ENCODE measurements at regions of chr15 and their contacts with region 1.

Region 1: DNA sequence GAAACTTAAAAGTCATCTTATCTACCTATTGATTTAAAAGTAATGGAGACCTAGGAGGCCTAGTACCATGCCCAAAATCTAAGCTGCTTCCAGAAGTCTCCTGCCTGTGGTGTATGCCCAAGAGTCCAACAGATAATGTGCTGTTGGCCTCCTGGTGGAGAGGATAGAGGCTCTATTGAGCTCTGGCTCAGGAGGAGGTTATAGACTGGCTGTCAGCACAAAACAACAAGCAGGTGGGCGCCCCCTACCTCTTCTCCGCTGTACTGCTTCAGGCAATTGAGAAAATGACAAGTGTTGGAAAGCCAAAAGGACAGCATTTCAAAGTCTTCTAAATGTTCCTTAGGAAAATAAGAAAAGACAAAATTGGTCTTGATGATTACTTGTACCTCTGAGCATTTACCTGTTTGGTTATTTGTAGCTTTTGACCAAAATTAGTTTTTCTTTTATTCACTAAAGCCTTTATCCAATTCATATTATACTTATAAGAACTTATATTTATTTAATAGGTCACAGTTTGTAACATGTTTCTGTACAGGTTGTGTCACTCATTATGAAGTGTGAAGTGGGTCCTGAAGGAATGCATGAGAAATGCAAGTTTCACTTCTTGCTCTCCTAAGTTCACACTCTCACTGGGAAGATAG is 17.2 kb upstream of the GNB5 start:
- DNase-seq: peak; percentile 86
- H3K4me3 Mint-ChIP-seq: no peak overlapping the region
- H3K27ac Mint-ChIP-seq: no peak overlapping the region
- H3K4me1 Mint-ChIP-seq: no peaks in the 10 kb centered on the region
- H3K27me3 Mint-ChIP-seq: no peaks in the 10 kb centered on the region

Region 2: DNA sequence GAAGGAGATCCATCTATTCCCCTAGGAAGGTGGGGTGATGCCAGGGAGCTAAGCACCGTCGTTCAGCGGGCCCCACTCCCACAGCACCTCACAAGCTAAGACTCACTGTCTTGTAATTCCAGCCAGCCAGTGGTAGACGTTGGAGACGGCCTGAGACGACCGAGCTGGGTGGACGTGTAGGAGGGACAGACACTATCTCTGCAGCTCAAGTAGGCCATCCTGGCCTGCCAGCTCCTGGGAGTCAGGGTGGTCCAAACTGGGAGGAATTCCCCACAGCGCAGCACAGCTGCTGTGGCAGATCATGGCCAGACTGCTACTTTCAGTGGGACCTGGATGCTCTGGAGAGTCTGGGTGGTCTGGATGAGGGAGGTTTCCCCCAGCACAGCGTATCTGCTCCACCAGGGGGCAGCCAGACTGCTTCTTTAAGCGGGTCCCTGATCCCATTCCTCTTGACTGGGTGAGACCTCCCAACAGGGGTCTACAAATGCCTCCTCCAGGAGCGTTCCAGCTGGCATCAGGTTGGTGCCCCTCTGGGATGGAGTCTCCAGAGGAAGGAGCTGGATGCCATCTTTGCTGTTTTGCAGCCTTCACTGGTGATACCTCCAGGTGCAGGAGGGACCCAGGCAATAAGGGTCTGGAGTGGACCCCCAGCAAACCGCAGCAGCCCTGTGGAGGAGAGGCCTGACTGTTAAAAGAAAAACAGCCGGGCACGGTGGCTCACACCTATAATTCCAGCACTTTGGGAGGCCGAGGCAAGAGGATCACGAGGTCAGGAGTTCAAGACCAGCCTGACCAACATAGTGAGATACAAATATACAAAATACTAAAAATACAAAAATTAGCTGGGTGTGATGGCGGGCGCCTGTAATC is 44.9 kb before region 1 on chr15:
- CTCF ChIA-PET with region 1: interaction called, 21 read pairs
- POLR2A ChIA-PET with region 1: no interaction called
- intact Hi-C with region 1: loop called (anchors 1 kb)
- DNase-seq: no peak
- H3K4me3 Mint-ChIP-seq: no peak overlapping the region
- H3K27ac Mint-ChIP-seq: no peak overlapping the region
- H3K4me1 Mint-ChIP-seq: peaks cover 31% of the 10 kb centered on the region
- H3K27me3 Mint-ChIP-seq: no peaks in the 10 kb centered on the region

Region 3: GRCh38 chr15:52179278-52180195 is 28.9 kb before region 1 on chr15:
- CTCF ChIA-PET with region 1: interaction called, 17 read pairs
- POLR2A ChIA-PET with region 1: interaction called, 3 read pairs
- intact Hi-C with region 1: loop called (anchors 2 kb)
- DNase-seq: peak; percentile 93
- H3K4me3 Mint-ChIP-seq: peak overlapping the region; percentile 94
- H3K27ac Mint-ChIP-seq: peak overlapping the region; percentile 94
- H3K4me1 Mint-ChIP-seq: peaks cover 28% of the 10 kb centered on the region
- H3K27me3 Mint-ChIP-seq: no peaks in the 10 kb centered on the region

Region 4: DNA sequence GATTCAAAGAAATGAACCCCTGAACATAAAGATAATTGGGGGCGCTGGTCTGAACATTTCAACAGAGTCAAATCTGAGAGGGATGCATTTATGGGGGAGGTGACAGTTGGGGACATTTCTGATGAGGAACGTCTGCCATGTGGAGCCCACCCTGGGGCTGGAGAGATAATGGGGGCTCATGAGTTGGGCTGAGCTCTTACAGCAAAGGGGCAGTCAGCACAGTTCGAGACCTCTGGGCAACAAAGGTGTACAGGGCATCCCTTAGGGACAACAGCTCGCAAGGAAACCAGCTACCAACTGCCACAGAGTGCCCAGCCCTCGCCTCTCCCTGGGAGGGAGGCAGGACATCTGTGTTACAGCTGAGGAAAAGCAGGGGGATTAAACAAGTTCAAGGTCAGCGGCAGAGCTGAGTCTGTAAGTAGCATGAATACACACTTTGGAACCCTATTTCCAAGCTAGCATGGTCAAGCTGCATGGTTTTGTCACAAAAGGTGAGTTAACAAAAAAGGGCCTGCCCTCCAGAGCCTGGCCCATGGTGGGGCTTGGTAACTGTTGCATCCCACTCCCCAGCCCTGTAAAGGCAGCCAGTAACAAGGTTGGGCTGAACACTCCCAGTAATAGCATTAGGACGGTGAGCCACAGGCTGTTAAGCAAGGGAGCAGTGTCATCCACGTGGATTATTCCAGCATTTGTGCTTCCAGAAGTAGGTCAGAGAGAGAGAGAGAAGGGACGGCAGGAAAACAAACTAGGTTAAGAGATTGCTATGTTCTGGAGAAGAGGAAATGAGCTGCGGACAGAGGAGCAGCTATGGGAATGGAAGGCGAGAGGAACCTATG is 21.6 kb before region 1 on chr15:
- CTCF ChIA-PET with region 1: interaction called, 17 read pairs
- POLR2A ChIA-PET with region 1: no interaction called
- intact Hi-C with region 1: no loop called
- DNase-seq: no peak
- H3K4me3 Mint-ChIP-seq: no peak overlapping the region
- H3K27ac Mint-ChIP-seq: no peak overlapping the region
- H3K4me1 Mint-ChIP-seq: peaks cover 2% of the 10 kb centered on the region
- H3K27me3 Mint-ChIP-seq: no peaks in the 10 kb centered on the region

Region 5: DNA sequence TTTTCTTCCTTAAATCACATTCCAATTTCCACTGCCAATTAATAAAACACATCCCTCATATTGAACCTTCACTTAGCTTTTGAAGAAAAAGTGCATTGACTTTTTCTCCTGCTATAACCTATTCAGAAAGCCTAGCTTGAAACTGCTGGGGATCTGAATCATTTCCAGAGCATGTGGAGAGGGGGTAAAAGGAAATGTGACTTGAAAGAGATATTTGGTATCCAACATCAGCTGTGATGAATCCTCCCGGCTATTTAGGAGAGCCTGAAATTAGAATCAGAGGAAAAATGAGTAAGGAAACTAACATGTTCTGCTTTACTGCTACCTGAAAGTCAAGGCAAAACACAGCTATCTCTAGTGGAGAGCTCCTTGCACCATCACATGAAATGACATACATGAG is 14.6 kb before region 1 on chr15:
- CTCF ChIA-PET with region 1: interaction called, 11 read pairs
- POLR2A ChIA-PET with region 1: no interaction called
- intact Hi-C with region 1: no loop called
- DNase-seq: no peak
- H3K4me3 Mint-ChIP-seq: no peak overlapping the region
- H3K27ac Mint-ChIP-seq: no peak overlapping the region
- H3K4me1 Mint-ChIP-seq: no peaks in the 10 kb centered on the region
- H3K27me3 Mint-ChIP-seq: no peaks in the 10 kb centered on the region

Region 6: GRCh38 chr15:52227456-52227855 is 19.0 kb after region 1 on chr15:
- CTCF ChIA-PET with region 1: interaction called, 18 read pairs
- POLR2A ChIA-PET with region 1: no interaction called
- intact Hi-C with region 1: loop called (anchors 1 kb)
- DNase-seq: peak; percentile 81
- H3K4me3 Mint-ChIP-seq: no peak overlapping the region
- H3K27ac Mint-ChIP-seq: no peak overlapping the region
- H3K4me1 Mint-ChIP-seq: peaks cover 18% of the 10 kb centered on the region
- H3K27me3 Mint-ChIP-seq: no peaks in the 10 kb centered on the region